Caco-2 (cell line): ENCODE measurements at regions of chr12 and their contacts with region 1.

Region 1: DNA sequence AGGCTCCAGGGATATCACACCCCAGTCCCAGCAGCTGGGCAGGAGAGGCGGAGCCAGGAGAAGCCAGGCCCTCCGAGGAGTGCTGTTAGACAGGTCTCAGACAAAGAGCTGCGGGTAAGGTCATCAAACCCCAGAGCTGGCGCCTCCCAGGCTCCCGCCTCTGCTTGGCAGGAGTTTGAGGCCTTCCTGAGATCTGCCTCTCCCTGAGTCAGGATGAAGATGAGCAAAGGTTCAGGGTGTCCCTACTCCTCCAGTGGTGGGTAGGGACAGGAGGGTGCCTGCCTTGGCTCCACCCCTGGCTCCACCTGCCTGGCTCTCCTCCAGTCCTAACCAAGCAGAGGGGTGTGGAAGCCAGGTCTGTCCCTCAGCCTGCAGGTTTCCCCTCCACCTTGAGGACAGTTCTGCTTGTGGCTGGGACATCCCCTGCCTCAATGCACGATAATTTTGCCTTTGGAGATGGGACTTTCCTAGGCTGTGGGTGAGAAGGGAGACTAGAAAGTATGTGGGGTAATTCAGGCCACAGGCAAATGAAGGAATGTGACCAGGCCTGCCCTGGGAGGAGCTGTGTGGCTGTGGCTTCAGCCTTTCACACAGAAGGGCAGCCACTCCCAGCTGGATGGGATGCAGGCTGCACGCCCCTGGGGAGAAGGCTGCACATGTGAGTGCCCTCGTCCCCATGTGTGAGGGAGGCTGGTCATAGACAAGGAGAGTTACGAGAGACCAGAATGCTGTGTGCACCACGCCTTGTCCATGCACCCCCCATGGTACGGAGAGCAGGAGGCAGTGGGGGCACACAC is 2.2 kb downstream of the PLEKHG6 start:
- DNase-seq: peak; percentile 84 to 86
- H3K4me3 ChIP-seq: no peak overlapping the region
- H3K4me3 Mint-ChIP-seq: peak overlapping the region; percentile 79
- H3K27ac Mint-ChIP-seq: peak overlapping the region; percentile 83
- H3K4me1 ChIP-seq: peaks cover 64% of the 10 kb centered on the region
- H3K4me1 Mint-ChIP-seq: peaks cover 45% of the 10 kb centered on the region
- H3K27me3 ChIP-seq: no peaks in the 10 kb centered on the region
- H3K27me3 Mint-ChIP-seq: no peaks in the 10 kb centered on the region
- CTCF ChIP-seq: no peak

Region 2: DNA sequence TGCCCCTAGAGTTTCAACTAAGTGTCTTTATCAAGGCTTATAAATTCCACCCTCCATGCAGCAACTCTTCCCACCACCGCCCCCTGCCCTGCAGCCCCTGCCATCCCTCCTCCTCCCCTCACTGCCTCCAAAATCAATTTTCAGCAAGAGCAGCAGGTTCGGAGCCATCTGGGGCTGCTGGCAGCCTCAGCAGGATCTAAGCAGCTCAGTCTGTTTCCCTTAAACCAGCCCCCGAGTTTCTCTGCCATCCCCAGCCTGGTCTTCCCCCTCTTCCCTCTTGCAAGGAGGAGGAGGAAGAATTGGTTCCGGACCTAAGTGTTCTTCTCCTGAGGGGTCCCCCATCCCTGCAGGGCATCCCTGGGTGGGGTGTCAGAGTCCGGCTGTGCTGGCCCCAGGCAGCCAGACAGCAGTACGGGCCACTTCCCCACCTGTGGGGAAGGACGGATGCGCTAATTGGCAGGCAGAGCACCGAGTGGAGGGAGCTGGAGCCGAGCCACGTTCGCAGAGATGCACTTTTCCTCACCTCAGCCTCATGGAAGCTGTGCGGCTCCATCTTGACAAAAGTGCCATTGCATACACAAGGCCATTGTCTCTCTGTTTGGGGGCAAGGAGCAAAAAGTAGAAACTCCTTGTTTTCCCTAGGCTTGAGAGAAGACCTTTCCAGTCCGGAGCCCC is 1079.8 kb before region 1 on chr12:
- CTCF ChIA-PET with region 1: no interaction called
- POLR2A ChIA-PET with region 1: no interaction called
- intact Hi-C with region 1: no loop called
- DNase-seq: no peak
- H3K4me3 ChIP-seq: no peak overlapping the region
- H3K4me3 Mint-ChIP-seq: no peak overlapping the region
- H3K27ac Mint-ChIP-seq: no peak overlapping the region
- H3K4me1 ChIP-seq: no peaks in the 10 kb centered on the region
- H3K4me1 Mint-ChIP-seq: no peaks in the 10 kb centered on the region
- H3K27me3 ChIP-seq: no peaks in the 10 kb centered on the region
- H3K27me3 Mint-ChIP-seq: no peaks in the 10 kb centered on the region
- CTCF ChIP-seq: no peak

Region 3: DNA sequence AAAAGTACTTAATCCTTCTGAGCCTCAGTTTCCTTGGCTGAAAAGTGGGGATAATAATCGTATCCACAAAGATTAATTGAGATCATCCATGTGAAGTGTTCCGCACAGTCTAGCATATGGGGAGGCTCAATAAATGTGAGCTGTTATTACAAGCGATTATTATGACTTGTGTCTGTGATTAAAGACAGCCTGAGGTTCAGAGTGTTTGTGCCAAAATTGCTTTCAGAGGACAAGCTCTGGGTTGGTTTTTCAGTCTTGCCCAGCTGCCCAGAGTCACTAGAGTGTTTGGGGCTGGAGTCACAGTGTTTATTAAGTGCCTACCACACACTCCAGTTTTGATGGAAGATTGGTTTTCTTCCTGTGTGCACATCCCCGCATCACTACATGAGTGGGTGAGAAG is 827.3 kb before region 1 on chr12:
- CTCF ChIA-PET with region 1: no interaction called
- POLR2A ChIA-PET with region 1: interaction called, 10 read pairs
- intact Hi-C with region 1: no loop called
- DNase-seq: no peak
- H3K4me3 ChIP-seq: no peak overlapping the region
- H3K4me3 Mint-ChIP-seq: no peak overlapping the region
- H3K27ac Mint-ChIP-seq: no peak overlapping the region
- H3K4me1 ChIP-seq: no peaks in the 10 kb centered on the region
- H3K4me1 Mint-ChIP-seq: no peaks in the 10 kb centered on the region
- H3K27me3 ChIP-seq: no peaks in the 10 kb centered on the region
- H3K27me3 Mint-ChIP-seq: no peaks in the 10 kb centered on the region
- CTCF ChIP-seq: no peak

Region 4: DNA sequence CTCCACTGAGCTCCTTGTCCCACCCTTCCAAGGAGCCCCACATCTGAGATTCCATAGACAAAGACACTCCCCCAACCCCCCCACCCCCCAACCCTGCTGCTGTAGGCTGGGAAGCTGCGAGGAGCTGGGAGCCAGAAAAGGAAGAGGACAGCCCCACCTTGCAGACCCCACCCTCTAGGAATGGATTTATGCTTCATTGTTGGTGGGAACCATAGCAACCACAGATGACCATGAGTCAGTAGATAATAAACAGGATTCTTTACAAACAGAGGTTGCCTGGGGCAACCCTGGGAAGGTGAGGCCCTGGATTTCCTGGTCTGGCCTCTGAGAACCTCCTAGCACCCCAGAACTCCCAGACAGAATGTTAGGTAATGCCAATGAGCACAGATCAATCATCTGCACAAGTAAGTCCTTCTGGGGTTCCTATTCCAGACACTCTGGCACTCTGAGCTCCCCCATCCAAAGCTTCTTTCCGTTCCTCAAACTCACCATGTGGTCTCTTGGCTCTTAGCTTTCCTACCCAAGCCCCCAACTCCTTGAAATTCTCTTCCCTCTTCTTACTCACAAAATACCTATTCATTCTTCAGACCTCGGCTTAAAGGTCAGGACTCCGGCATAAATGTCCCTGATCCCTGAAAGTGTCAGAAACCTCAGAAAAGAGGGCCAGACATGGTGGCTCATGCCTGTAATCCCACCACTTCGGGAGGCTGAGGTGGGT is 17.5 kb before region 1 on chr12:
- CTCF ChIA-PET with region 1: interaction called, 5 read pairs
- POLR2A ChIA-PET with region 1: interaction called, 23 read pairs
- intact Hi-C with region 1: loop called (anchors 1 kb)
- DNase-seq: peak; percentile 86 to 89
- H3K4me3 ChIP-seq: no peak overlapping the region
- H3K4me3 Mint-ChIP-seq: no peak overlapping the region
- H3K27ac Mint-ChIP-seq: peak overlapping the region; percentile 91
- H3K4me1 ChIP-seq: peaks cover 48% of the 10 kb centered on the region
- H3K4me1 Mint-ChIP-seq: peaks cover 34% of the 10 kb centered on the region
- H3K27me3 ChIP-seq: no peaks in the 10 kb centered on the region
- H3K27me3 Mint-ChIP-seq: no peaks in the 10 kb centered on the region
- CTCF ChIP-seq: no peak

Region 5: DNA sequence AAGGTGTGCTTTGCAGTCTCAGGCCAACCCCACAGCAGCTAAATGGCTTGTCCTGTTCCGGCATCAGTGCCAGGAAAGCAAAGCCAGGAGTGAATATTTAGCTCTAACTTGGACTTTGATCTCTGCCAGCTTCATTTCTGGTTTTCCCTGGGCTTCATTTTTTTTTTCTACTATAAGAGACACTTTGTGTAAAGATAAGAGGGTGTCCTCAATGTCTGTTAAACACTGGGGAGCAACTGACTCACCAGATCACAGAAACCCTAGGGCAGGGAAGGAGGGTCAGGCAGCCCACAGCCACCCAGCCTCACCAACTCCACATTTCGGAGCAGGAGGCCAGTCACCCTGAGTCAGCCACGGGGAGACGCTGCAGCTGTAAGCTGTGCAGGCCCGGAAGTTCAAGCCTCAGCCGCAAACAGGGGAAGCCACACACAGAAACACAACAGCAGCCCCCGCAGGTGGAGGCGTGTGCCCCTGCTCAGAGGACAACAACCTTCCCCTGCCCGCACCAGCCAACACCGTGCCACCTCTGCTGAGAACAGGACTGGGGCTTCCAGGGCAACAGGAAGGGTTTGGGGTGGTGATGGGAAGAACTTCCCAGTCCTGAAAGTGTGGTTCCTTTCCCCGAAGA is 22.8 kb after region 1 on chr12:
- CTCF ChIA-PET with region 1: interaction called, 4 read pairs
- POLR2A ChIA-PET with region 1: interaction called, 37 read pairs
- intact Hi-C with region 1: loop called (anchors 2 kb)
- DNase-seq: peak; percentile 64 to 66
- H3K4me3 ChIP-seq: peak overlapping the region; percentile 15; the same call in 1 of the 2 replicates
- H3K4me3 Mint-ChIP-seq: no peak overlapping the region
- H3K27ac Mint-ChIP-seq: no peak overlapping the region
- H3K4me1 ChIP-seq: peaks cover 48% of the 10 kb centered on the region
- H3K4me1 Mint-ChIP-seq: peaks cover 7% of the 10 kb centered on the region
- H3K27me3 ChIP-seq: no peaks in the 10 kb centered on the region
- H3K27me3 Mint-ChIP-seq: no peaks in the 10 kb centered on the region
- CTCF ChIP-seq: peak in 1 of 2 experiments; percentile 56

Region 6: DNA sequence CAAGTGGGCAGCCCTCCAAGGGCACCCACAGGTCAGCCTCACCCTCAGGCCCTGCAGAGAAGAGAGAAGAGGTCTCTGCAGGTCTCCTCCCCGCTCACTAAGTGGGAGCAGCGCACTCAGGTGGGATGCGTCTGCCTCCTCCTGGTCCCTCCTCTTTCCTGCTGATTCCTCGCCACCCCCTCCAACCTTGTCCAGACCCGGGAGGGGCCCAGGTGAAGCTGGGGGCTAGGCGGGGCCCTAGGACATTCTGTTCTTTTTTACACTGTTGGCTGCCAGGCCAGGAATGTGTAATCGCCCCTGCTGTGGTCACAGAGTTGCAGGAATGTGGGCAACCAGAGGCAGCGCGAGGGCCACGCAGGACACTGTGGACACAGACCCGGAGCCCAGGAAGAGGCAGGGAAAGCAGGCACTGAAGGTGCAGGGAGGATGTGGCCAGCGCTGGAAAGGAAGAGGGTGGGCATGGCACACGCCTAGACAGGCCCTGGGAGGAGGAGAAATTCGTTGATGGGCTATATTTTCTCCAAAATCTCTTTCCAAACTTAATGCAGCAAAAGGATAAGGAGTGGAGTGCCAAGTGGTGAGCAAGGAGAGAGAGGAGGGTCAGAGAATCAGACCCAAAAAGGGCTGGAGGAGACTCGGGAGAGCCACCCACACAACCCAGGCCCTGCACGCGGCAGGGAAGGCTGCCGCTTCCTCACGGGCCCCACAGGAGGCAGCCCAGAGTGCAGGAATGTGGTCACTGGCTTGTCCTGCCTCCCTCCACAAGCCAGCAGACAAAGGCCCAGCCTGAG is 63.5 kb after region 1 on chr12:
- CTCF ChIA-PET with region 1: interaction called, 5 read pairs
- POLR2A ChIA-PET with region 1: interaction called, 3 read pairs
- intact Hi-C with region 1: loop called (anchors 2 kb)
- DNase-seq: peak; percentile 88 to 89
- H3K4me3 ChIP-seq: no peak overlapping the region
- H3K4me3 Mint-ChIP-seq: peak overlapping the region; percentile 72
- H3K27ac Mint-ChIP-seq: peak overlapping the region; percentile 94
- H3K4me1 ChIP-seq: peaks cover 68% of the 10 kb centered on the region
- H3K4me1 Mint-ChIP-seq: peaks cover 51% of the 10 kb centered on the region
- H3K27me3 ChIP-seq: no peaks in the 10 kb centered on the region
- H3K27me3 Mint-ChIP-seq: no peaks in the 10 kb centered on the region
- CTCF ChIP-seq: peak; percentile 69 to 71